Astrocyte of the cerebellum (primary cell): ENCODE measurements at regions of chr3 and their contacts with region 1.

Region 1: GRCh38 chr3:177824190-177824786 is 627.0 kb upstream of the TBL1XR1 start:
- DNase-seq: no peak
- H3K4me3 ChIP-seq: no peak overlapping the region
- CTCF ChIP-seq: no peak

Region 2: GRCh38 chr3:177792311-177793030 is 31.8 kb before region 1 on chr3:
- in situ Hi-C with region 1: loop called (anchors 5 kb)
- DNase-seq: no peak
- H3K4me3 ChIP-seq: no peak overlapping the region
- CTCF ChIP-seq: no peak

Region 3: GRCh38 chr3:177860184-177860583 is 35.9 kb after region 1 on chr3:
- in situ Hi-C with region 1: loop called (anchors 5 kb)
- DNase-seq: no peak
- H3K4me3 ChIP-seq: no peak overlapping the region
- CTCF ChIP-seq: no peak

Region 4: GRCh38 chr3:177904661-177905060 is 80.4 kb after region 1 on chr3:
- in situ Hi-C with region 1: loop called (anchors 5 kb)
- DNase-seq: peak; percentile 19
- H3K4me3 ChIP-seq: no peak overlapping the region
- CTCF ChIP-seq: no peak